OCI-LY7 (cell line): ENCODE measurements at regions of chr5 and their contacts with region 1.

Region 1: GRCh38 chr5:14664302-14665100 is at the start of gene OTULIN:
- DNase-seq: peak; percentile 94
- H3K4me3 ChIP-seq: peak within 1 kb of the TSS; percentile 87
- H3K27ac ChIP-seq: peak within 1 kb of the TSS; percentile 90
- H3K4me1 ChIP-seq: peaks cover 67% of the 10 kb centered on the region
- CTCF ChIP-seq: no peak
- total RNA-seq, gene OTULIN: 19.2 and 28.7 TPM in 2 replicates

Region 2: GRCh38 chr5:14174230-14174637 is 490.3 kb before region 1 on chr5:
- CTCF ChIA-PET with region 1: no interaction called
- POLR2A ChIA-PET with region 1: interaction called, 3 read pairs
- intact Hi-C with region 1: loop called (anchors 10 kb)
- DNase-seq: peak; percentile 25
- H3K4me3 ChIP-seq: peak overlapping the region; percentile 38
- H3K27ac ChIP-seq: peak overlapping the region; percentile 19
- H3K4me1 ChIP-seq: peaks cover 48% of the 10 kb centered on the region
- CTCF ChIP-seq: no peak

Region 3: GRCh38 chr5:14223372-14223771 is 441.1 kb before region 1 on chr5:
- CTCF ChIA-PET with region 1: no interaction called
- POLR2A ChIA-PET with region 1: no interaction called
- intact Hi-C with region 1: loop called (anchors 5 kb)
- DNase-seq: peak; percentile 67
- H3K4me3 ChIP-seq: peak overlapping the region; percentile 28
- H3K27ac ChIP-seq: peak overlapping the region; percentile 66
- H3K4me1 ChIP-seq: peaks cover 75% of the 10 kb centered on the region
- CTCF ChIP-seq: no peak

Region 4: DNA sequence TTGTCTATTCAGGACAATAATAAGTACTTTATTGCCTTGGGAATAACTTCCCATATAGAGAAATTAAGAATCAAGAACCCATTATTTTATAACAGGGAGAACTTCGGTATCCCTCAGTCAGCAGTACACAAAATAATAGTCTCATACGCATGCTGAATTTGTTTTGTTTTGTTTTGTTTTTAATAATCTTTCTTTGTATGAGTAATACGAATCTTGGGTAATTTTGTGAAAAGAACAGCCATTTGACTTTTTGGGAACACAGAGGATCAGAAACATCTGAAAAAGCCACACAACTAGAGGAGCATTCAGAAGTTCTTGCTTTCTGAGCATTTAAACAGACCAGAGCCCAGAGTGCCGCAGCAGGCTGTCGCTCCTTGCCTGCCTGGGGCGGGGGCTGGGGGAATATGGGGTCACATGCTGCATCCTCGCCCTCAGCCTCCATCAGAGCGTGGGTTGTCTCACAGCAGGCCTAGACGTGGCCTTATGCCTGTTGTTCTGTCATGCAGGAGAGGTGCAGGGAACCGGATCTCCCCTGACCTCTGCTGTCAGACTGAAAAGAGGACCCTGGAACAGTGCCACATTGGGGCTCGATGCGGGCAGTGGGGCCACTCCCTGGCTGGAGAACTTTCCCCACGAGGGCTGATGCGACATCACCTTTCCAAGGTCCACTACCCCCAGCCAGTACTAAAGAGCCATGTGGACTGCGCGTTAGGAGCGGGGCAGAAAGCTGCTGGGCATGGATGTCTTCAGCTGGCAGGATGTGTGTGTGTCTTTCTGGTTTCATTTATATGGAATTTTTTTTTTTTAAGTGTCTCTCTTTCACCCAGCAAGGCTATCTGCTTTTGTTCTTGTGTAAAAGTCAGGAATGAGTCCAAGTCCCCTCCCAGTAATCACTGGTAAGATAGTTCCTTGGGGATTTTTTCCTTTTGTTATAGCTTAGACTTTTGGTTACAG is 216.3 kb before region 1 on chr5:
- CTCF ChIA-PET with region 1: no interaction called
- POLR2A ChIA-PET with region 1: no interaction called
- intact Hi-C with region 1: no loop called
- DNase-seq: no peak
- H3K4me3 ChIP-seq: no peak overlapping the region
- H3K27ac ChIP-seq: no peak overlapping the region
- H3K4me1 ChIP-seq: no peaks in the 10 kb centered on the region
- CTCF ChIP-seq: no peak

Region 5: DNA sequence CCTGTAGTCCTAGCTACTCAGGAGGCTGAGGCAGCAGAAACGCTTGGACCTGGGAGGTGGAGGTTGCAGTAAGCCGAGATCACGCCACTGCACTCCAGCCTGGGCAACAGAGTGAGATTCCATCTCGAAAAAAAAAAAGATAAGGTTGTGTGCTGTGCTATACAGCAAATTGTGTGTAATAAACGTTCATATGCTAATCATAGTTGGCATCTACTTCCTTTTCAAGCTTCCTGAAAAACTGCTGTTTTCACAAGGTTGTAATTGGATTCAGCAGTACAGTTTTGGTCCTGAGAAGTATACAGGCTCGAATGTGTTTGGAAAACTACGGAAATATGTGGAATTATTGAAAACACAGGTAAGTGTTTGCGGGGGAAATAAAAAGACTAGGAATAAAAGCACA is 57.4 kb before region 1 on chr5:
- CTCF ChIA-PET with region 1: no interaction called
- POLR2A ChIA-PET with region 1: no interaction called
- intact Hi-C with region 1: no loop called
- DNase-seq: no peak
- H3K4me3 ChIP-seq: no peak overlapping the region
- H3K27ac ChIP-seq: no peak overlapping the region
- H3K4me1 ChIP-seq: no peaks in the 10 kb centered on the region
- CTCF ChIP-seq: no peak

Region 6: GRCh38 chr5:16465544-16466466 is 1801.3 kb after region 1 on chr5 and contains the start of gene ZNF622:
- CTCF ChIA-PET with region 1: no interaction called
- POLR2A ChIA-PET with region 1: interaction called, 5 read pairs
- intact Hi-C with region 1: loop called (anchors 10 kb)
- DNase-seq: peak; percentile 95
- H3K4me3 ChIP-seq: peak within 1 kb of the TSS; percentile 99
- H3K27ac ChIP-seq: peak within 1 kb of the TSS; percentile 44
- H3K4me1 ChIP-seq: peaks cover 35% of the 10 kb centered on the region
- CTCF ChIP-seq: no peak
- total RNA-seq, gene ZNF622: 25.7 and 30.5 TPM in 2 replicates